ENCODE measurements at regions of chr10 and their contacts with region 1.

Region 1: GRCh38 chr10:103897241-103897774 is 20.7 kb downstream of the STN1 start:
- DNase-seq: no peak
- H3K4me3 Mint-ChIP-seq: no peak overlapping the region
- H3K27ac Mint-ChIP-seq: no peak overlapping the region
- H3K4me1 Mint-ChIP-seq: peaks cover 53% of the 10 kb centered on the region
- H3K27me3 Mint-ChIP-seq: no peaks in the 10 kb centered on the region

Region 2: DNA sequence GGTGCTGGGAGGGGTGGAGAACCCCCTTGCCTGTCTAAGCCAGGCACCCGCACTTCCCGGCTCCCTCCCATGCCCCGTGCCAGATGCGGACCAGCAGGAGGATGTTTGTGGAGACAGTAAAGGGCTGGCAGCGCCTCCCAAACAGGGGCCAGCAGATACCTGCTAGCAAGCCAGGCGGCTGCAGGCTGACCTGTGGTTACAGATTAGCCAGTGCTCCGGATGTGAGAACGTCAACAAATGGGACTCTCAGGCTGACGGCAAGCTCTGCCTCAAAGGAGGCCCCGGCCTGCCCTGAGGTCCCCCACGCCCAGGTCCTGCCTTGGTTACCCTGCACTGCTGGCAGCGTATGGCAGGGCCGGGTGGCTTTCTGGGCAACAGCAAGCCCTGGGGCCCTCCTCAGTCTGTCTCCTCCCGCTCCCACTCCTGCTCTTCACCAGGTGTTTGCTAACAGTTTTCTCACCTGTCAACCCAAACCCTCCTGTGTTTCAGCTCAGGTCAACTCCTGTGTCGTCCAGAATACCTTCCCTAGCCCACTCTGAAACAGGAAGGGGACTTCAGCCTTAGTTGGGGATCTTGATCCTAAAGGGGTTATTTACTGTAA is 318.4 kb before region 1 on chr10:
- CTCF ChIA-PET with region 1: no interaction called
- POLR2A ChIA-PET with region 1: no interaction called
- DNase-seq: no peak
- H3K4me3 Mint-ChIP-seq: no peak overlapping the region
- H3K27ac Mint-ChIP-seq: no peak overlapping the region
- H3K4me1 Mint-ChIP-seq: peaks cover 7% of the 10 kb centered on the region
- H3K27me3 Mint-ChIP-seq: peaks cover 2% of the 10 kb centered on the region

Region 3: GRCh38 chr10:103793920-103794883 is 103.1 kb before region 1 on chr10:
- CTCF ChIA-PET with region 1: no interaction called
- POLR2A ChIA-PET with region 1: no interaction called
- DNase-seq: no peak
- H3K4me3 Mint-ChIP-seq: no peak overlapping the region
- H3K27ac Mint-ChIP-seq: no peak overlapping the region
- H3K4me1 Mint-ChIP-seq: peaks cover 10% of the 10 kb centered on the region
- H3K27me3 Mint-ChIP-seq: peaks cover 5% of the 10 kb centered on the region

Region 4: DNA sequence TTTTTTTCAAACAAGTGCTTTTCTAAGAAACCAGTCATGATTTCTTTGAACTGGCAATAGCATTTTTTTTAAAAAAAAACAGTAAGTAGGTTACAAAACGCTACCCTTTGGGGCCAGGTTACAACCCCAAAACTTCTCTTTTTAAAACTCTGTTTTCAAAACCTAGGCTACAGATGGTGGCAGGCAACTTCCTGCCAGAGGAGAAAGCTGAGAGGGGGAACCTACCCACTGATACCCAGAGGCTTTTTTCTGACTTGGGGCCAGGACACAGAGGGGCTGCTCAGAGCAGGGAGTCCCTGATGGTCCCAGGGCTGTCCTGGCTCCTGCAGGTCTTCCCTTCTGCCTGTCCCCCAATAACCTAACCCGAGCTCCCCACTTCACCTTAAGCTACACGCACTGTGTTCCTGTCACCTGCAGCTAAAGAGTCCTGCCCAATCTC is 13.7 kb after region 1 on chr10:
- CTCF ChIA-PET with region 1: interaction called, 14 read pairs
- POLR2A ChIA-PET with region 1: interaction called, 3 read pairs
- DNase-seq: peak; percentile 77
- H3K4me3 Mint-ChIP-seq: peak overlapping the region; percentile 75
- H3K27ac Mint-ChIP-seq: peak overlapping the region; percentile 98
- H3K4me1 Mint-ChIP-seq: peaks cover 74% of the 10 kb centered on the region
- H3K27me3 Mint-ChIP-seq: no peaks in the 10 kb centered on the region

Measured in activated CD4-positive, alpha-beta T cell treated with anti-CD3 and anti-CD28 coated beads, Interleukin-2, amount 10 ng/mL, durations not matched to agents 7 days and 5 days (primary cell).